HCT116 (cell line): ENCODE measurements at regions of chr9 and their contacts with region 1.

Region 1: DNA sequence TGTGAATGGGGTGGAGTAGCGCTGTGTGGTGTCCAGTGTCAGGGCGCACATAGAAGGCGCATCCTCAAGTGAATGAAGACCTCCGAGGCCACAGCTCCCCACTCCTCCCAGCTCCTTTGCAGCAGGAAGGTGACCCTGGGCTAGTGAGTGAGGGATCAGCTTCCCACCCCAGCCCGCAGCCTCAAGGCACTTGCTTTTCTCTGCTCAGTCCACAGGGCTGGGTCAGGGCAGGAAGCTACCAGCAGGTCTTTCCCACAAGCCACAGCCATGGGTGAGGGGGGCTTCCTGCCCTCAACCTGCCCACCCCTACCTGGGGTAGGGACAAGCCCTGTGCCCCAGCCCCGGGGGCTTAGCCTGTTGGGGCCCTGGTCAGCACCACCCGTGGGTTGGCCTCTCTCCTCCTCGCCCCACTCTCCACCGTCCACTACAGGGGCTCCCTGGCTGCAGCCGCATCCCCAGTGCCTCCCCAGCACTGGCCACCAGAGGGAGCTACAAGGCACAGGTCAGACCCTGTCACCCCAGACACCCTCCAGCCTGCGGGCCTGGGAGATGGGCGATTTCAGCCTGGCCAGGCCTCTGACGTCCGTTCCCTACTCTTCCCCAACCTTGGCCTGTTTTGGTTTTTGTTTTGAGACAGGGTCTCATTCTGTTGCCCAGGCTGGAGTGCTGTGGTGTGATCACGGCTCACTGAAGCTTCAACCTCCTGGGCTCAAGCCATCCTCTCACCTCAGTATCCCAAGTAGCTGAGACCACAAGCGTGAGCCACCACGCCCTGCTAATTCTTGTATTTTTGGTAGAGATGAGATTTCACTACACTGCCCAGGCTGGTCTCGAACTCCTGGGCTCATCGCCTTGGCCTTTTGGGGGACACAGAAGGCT is 1.3 kb upstream of the ABCA2 start:
- DNase-seq: no peak
- ATAC-seq: peak; percentile 77
- H3K4me3 ChIP-seq: peak overlapping the region; percentile 56 to 70
- H3K27ac ChIP-seq: peak overlapping the region; percentile 85; the same call in 1 of the 2 replicates
- H3K4me1 ChIP-seq: peaks cover 32 to 49% of the 10 kb centered on the region in 2 experiments
- H3K27me3 ChIP-seq: no peaks in the 10 kb centered on the region
- CTCF ChIP-seq: peak in 2 of 3 experiments; percentile 87 to 97; a peak in 4 of 6 replicates
- POLR2A ChIP-seq: no peak
- RAD21 ChIP-seq: no peak

Region 2: DNA sequence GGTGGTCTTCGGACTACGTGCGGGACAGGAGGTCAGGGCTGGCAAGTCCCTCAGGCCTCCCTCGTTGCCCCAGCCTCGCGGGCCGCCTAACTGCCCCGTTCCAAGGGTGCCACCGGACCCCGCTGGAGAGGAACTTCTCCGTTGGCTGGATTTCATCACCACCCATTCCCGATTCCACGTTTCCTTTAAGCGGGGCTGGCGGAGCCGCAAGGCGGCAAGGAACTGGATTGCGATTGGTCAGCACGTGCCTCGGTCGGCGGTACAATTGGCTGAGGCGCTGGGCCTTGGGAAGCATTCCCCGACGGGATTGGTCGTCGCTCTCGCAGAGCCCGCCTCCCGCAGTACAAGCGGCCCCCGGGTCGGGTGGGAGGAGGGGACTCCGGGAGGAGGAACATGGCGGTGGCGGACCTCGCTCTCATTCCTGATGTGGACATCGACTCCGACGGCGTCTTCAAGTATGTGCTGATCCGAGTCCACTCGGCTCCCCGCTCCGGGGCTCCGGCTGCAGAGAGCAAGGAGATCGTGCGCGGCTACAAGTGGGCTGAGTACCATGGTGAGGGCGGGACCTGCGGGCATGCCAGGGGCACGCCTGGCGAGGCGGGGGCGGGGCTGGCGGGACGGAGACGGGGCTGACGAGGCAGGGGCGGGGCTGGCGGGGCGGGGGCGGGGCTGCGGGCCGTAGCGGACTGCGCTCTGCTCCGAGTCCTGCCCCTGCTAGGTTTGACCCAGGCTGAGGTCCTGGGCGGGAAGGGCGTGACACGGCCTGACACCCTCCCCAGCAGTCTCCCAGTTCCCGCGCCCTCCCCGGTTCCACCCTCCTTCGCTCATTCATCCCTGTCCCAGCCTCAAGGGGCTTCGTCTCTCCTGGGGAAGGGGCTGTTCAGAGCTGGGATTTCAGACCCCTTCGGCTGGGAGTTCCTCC is 180.0 kb before region 1 on chr9 and contains the start of gene PHPT1:
- CTCF ChIA-PET with region 1: interaction called, 9 read pairs
- POLR2A ChIA-PET with region 1: no interaction called
- RAD21 ChIA-PET with region 1: no interaction called
- intact Hi-C with region 1: loop called (anchors 5 kb)
- DNase-seq: peak; percentile 98
- ATAC-seq: peak; percentile 76
- H3K4me3 ChIP-seq: peak within 1 kb of the TSS; percentile 85 to 99
- H3K27ac ChIP-seq: peak within 1 kb of the TSS; percentile 88
- H3K4me1 ChIP-seq: peaks cover 4 to 17% of the 10 kb centered on the region in 2 experiments; a peak in 2 of 4 replicates
- H3K27me3 ChIP-seq: no peaks in the 10 kb centered on the region
- CTCF ChIP-seq: no peak
- POLR2A ChIP-seq: peak; percentile 76
- RAD21 ChIP-seq: no peak
- total RNA-seq, gene PHPT1: 148 TPM

Region 3: GRCh38 chr9:136949817-136950655 is 79.3 kb before region 1 on chr9:
- CTCF ChIA-PET with region 1: interaction called, 109 read pairs
- POLR2A ChIA-PET with region 1: interaction called, 6 read pairs
- RAD21 ChIA-PET with region 1: interaction called, 4 to 25 read pairs
- intact Hi-C with region 1: no loop called
- DNase-seq: peak; percentile 85
- ATAC-seq: peak; percentile 87
- H3K4me3 ChIP-seq: peak overlapping the region; percentile 65 to 67
- H3K27ac ChIP-seq: peak overlapping the region; percentile 94
- H3K4me1 ChIP-seq: peaks cover 22 to 43% of the 10 kb centered on the region in 2 experiments
- H3K27me3 ChIP-seq: no peaks in the 10 kb centered on the region
- CTCF ChIP-seq: peak in 2 of 3 experiments; percentile 12 to 22; a peak in 2 of 6 replicates
- POLR2A ChIP-seq: peak; percentile 60
- RAD21 ChIP-seq: no peak

Region 4: GRCh38 chr9:136978073-136978864 is 51.0 kb before region 1 on chr9:
- CTCF ChIA-PET with region 1: interaction called, 11 read pairs
- POLR2A ChIA-PET with region 1: no interaction called
- RAD21 ChIA-PET with region 1: no interaction called
- intact Hi-C with region 1: no loop called
- DNase-seq: no peak
- ATAC-seq: peak; percentile 63
- H3K4me3 ChIP-seq: peak overlapping the region; percentile 24 to 46; a peak in 3 of 4 replicates
- H3K27ac ChIP-seq: peak overlapping the region; percentile 51; the same call in 1 of the 2 replicates
- H3K4me1 ChIP-seq: peaks cover 2 to 32% of the 10 kb centered on the region in 2 experiments; a peak in 3 of 4 replicates
- H3K27me3 ChIP-seq: no peaks in the 10 kb centered on the region
- CTCF ChIP-seq: no peak
- POLR2A ChIP-seq: no peak
- RAD21 ChIP-seq: no peak

Region 5: DNA sequence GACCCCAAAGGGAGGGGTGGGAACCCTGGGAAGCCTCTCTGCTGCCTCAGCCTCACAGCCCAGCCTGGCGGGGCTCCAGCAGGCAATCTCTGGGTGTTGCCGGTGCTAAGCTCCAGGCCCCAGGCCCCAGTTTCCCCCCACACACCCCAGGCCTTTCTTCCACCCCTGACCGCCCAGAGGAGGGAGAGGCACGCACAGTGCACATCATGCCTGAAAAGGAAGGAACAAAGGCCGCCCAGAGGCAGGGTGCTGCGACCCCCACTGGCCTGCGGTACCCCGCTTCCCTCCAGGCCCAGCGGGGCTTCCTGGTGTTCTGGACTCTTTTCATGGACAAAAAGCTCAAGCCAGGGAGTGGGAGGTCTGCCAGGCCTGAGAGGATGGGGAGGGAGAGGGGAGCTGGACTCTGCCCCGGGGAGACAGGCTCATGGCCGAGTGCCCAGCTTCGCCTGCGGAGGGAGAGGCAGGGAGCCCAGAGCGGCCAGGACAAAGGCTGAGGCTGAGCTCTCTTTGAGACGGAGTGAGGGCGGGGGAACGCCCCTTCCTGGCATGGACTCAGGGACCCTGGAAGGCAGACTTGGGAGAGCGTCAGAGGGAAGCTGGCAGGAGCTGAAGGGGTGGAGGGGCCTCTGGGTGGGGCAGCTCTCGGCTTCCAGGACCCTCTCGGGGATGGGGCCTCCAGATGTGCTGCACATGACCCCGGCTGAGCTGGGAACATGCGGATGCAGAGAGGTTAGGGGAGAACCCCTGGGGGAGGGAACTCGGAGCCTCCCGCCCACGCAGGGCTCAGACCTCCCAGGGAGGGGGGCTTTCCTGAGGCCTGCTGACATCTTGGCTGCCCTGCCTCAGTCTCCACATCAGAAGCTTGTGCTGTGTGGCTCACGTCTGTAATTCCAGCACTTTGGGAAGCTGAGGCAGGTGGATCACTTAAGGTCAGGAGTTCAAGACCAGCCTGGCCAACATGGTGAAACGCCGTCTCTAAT is 26.4 kb after region 1 on chr9:
- CTCF ChIA-PET with region 1: interaction called, 22 read pairs
- POLR2A ChIA-PET with region 1: no interaction called
- RAD21 ChIA-PET with region 1: no interaction called
- intact Hi-C with region 1: no loop called
- DNase-seq: no peak
- ATAC-seq: no peak
- H3K4me3 ChIP-seq: no peak overlapping the region
- H3K27ac ChIP-seq: peak overlapping the region; percentile 85; the same call in 1 of the 2 replicates
- H3K4me1 ChIP-seq: peaks cover 22 to 40% of the 10 kb centered on the region in 2 experiments
- H3K27me3 ChIP-seq: no peaks in the 10 kb centered on the region
- CTCF ChIP-seq: no peak
- POLR2A ChIP-seq: no peak
- RAD21 ChIP-seq: no peak

Region 6: DNA sequence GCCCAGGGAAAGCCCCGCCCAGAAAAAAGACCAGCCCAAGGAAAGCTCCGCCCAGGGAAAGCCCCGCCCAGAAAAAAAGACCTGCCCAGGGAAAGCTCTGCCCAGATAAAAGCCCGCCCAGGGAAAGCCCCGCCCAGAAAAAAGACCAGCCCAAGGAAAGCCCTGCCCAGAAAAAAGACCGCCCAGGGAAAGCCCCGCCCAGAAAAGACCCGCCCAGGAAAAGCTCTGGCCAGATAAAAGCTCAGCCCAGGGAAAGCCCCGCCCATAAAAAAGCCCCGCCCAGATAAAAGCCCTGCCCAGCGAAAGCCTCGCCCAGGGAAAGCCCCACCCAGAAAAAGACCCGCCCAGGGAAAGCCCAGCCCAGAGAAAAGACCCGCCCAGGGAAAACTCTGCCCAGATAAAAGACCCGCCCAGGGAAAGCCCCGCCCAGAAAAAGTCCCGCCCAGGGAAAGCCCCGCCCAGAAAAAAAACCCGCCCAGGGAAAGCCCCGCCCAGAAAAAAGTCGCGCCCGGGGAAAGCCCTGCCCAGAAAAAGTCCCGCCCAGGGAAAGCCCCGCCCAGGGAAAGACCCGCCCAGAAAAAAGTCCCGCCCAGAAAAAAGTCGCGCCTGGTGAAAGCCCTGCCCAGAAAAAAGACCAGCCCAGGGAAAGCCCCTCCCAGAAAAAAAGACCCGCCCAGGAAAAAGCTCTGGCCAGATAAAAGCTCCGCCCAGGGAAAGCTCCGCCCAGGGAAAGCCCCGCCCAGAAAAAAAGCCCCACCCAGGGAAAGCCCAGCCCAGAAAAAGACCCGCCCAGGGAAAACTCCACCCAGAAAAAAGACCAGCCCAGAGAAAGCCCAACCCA is 121.5 kb after region 1 on chr9:
- CTCF ChIA-PET with region 1: interaction called, 11 read pairs
- POLR2A ChIA-PET with region 1: interaction called, 3 read pairs
- RAD21 ChIA-PET with region 1: interaction called in 1 of 2 experiments, 3 read pairs
- intact Hi-C with region 1: no loop called
- DNase-seq: peak; percentile 79
- ATAC-seq: peak; percentile 75
- H3K4me3 ChIP-seq: no peak overlapping the region
- H3K27ac ChIP-seq: peak overlapping the region; percentile 47; the same call in 1 of the 2 replicates
- H3K4me1 ChIP-seq: peaks cover 12 to 22% of the 10 kb centered on the region in 2 experiments
- H3K27me3 ChIP-seq: no peaks in the 10 kb centered on the region
- CTCF ChIP-seq: no peak
- POLR2A ChIP-seq: no peak
- RAD21 ChIP-seq: no peak